ENCODE measurements at regions of chr9 and their contacts with region 1.

Region 1: DNA sequence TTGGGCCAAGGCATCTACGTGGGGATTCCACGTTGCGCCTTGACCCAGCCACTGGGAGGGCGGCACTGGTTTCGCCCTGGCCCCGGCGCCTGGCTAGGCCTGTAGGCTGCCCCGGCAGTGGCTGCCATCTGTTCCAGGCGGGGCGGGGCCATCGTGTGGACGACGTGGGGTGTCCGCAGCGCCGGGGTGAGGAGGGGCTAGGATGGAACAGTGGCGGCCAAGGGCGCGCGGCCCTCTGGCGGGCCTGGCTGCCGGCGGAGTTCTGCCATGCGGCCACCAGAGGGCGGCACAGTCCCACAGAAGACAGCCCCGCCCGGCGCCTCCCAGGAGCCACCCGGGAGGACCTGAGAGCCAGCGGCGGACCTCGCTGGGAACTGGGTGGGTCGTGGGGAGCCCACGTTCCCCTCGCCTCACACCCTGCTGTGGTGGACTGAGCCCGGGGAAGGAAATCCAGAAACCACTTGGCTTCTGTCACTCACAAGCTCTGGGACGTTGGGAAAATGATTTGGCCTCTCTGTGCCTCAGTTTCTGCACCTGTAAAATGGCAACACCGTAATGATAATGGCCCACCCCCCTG is 22.6 kb upstream of the RAPGEF1 start:
- DNase-seq: peak; percentile 60 to 74 (median 69)
- H3K4me3 ChIP-seq: no peak overlapping the region
- H3K27ac ChIP-seq: no peak overlapping the region
- H3K4me1 ChIP-seq: peaks cover 0 to 3% (median 1%) of the 10 kb centered on the region in 4 experiments
- H3K27me3 ChIP-seq: peaks cover 3 to 27% (median 8%) of the 10 kb centered on the region in 5 experiments

Region 2: GRCh38 chr9:131678499-131679111 is 83.8 kb before region 1 on chr9:
- CTCF ChIA-PET with region 1: no interaction called
- POLR2A ChIA-PET with region 1: no interaction called
- DNase-seq: peak in 2 of 3 donors; percentile 58 to 60
- H3K4me3 ChIP-seq: no peak overlapping the region
- H3K27ac ChIP-seq: no peak overlapping the region
- H3K4me1 ChIP-seq: peaks cover 27 to 63% (median 47%) of the 10 kb centered on the region in 4 experiments
- H3K27me3 ChIP-seq: no peaks in the 10 kb centered on the region

Region 3: DNA sequence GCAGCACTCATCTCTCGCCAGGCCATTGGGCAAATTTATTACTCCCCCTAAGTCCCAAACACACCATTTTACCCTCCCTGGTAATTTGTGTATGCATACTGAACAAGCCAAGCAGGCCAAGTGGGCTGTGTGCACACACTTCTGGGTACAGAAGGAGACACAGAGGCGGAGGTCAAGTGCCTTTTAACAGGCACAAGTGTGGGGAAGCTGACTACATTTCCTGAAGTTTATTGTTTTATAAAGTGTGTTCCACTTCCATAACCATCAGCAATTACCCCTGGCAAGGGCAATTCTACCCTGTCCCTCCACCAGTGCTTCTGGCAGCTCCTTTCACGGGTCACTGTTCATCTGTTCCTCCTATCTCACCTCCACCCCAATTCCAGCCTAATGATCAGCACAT is 498.4 kb after region 1 on chr9:
- CTCF ChIA-PET with region 1: interaction called, 28 read pairs
- POLR2A ChIA-PET with region 1: interaction called, 3 read pairs
- DNase-seq: no peak
- H3K4me3 ChIP-seq: no peak overlapping the region
- H3K27ac ChIP-seq: no peak overlapping the region
- H3K4me1 ChIP-seq: peaks cover 0 to 6% (median 5%) of the 10 kb centered on the region in 4 experiments
- H3K27me3 ChIP-seq: peaks cover 0 to 2% (median 0%) of the 10 kb centered on the region in 5 experiments

Region 4: DNA sequence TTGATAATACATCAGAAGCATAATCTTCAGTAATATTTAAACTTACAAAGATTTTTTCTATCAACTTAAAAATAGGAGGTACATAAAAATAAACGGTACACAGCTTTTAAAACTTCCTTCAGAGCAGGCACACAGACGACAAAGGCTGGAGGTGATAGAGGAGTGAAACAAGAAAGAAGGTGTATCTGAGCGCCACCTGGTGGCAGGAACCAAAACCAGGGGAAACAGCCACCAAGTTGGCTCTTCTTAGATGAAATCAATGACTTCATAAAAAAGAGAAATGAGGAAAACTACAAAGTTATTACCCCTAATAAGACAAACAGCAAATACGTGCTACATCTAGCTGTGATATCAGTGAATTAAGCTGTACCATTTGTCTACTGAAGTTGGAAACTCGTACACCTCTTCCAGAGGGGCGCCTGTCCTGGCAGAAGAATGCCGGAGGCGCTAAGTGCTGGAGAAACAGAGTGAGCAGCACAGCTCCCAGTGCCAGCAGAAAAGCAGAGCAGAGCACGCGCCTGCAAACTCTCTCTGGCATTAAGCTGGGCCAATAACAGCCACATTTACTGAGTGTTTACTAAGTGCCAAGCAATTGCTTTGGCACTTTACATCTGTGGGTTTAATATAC is 506.4 kb after region 1 on chr9:
- CTCF ChIA-PET with region 1: interaction called, 17 read pairs
- POLR2A ChIA-PET with region 1: interaction called, 3 read pairs
- DNase-seq: peak; percentile 76 to 87 (median 83)
- H3K4me3 ChIP-seq: no peak overlapping the region
- H3K27ac ChIP-seq: no peak overlapping the region
- H3K4me1 ChIP-seq: no peaks in the 10 kb centered on the region
- H3K27me3 ChIP-seq: no peaks in the 10 kb centered on the region

Measured in common myeloid progenitor, CD34-positive (primary cell).